ENCODE measurements at regions of chr1 and their contacts with region 1.

Region 1: DNA sequence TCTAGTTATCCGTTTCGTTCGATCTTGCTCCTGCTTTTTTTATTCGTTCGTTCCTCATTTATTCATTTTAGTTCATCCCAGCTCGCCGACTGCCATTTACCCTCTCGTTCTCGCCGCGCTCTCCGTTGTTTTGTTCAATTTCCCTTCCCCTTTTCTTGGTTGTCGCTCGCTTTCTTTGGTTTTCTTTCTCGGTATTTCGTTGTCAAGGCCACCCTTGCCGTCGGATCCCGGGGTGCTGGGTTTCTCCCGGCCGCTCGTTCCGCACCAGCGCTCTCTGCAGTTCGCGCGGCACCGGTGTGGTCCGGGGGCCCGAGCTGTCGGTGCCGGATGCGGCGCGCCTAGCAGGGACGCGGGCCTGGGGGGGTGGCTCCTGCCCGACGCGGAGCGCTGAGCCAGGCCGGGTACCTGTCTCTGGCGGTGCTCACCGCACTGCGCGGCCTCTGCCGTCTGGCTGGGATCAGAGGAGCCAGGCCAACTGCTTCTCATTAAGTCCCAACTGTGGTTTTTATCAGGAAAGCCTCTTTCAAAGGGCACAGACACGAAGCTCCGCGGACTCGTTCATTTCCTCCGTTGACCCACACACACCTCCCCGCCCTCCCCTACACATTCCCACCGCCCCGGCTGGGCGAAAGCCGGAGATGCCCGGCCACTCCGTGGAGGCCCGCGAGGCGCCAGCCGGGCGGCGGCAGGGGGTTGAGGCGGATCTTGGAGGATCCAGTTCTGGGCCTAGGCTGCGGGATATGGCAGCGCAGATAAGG is 1.6 kb downstream of the ALX3 start:
- DNase-seq: no peak
- H3K4me3 Mint-ChIP-seq: peak overlapping the region; percentile 42
- H3K27ac Mint-ChIP-seq: peak overlapping the region; percentile 11
- H3K4me1 Mint-ChIP-seq: peaks cover 4% of the 10 kb centered on the region
- H3K27me3 Mint-ChIP-seq: peaks cover 65% of the 10 kb centered on the region

Region 2: GRCh38 chr1:110087812-110088738 is 19.2 kb after region 1 on chr1:
- intact Hi-C with region 1: loop called (anchors 2 kb)
- DNase-seq: peak; percentile 27
- H3K4me3 Mint-ChIP-seq: no peak overlapping the region
- H3K27ac Mint-ChIP-seq: no peak overlapping the region
- H3K4me1 Mint-ChIP-seq: peaks cover 9% of the 10 kb centered on the region
- H3K27me3 Mint-ChIP-seq: peaks cover 58% of the 10 kb centered on the region

Measured in activated T-helper 2 cell treated with anti-CD3 and anti-CD28 coated beads, Interferon-gamma antibody, Interleukin-2, Interleukin-4, amounts not matched to agents 10 μg/mL and 5 μg/mL and 100 μg/mL, durations not matched to agents 14 hours and 24 hours and 36 hours (primary cell).